ENCODE measurements at regions of chr12 and their contacts with region 1.

Region 1: DNA sequence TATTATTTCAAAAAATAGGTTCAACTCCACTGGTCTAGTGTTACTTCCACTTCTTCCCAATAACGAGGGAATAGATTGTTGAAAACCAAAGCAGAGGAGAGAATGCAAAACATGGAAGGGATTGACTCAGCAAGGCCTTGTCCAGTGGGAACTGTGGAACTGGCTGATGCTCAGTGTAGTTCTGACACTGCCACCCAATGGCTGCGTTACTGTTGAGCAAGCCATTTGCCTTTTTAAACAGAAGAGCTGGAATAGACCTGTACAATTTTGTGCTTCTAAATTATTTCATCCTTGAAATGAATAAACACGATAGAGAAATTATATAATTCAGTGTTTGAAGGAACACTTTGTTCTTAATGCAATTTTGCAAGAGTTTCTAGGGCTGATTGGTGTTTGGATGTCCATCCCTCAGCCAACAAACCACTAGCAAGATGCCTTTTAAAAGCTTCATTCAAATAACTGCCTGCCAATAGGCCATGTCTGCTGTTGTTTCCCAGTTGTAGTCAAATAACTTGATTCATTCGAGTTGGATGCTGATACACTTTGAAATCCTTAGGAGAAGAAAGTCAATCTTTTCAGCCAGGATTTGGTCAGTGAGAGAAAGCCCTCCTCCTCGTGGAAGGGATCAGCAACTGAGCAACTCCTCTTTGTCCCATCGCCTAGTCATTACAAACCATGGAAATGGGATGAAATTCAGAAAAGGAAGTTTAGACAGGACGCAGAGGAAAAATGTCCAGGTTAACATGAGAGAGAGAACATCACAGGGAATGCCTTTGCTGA is 7.3 kb upstream of the MGP start:
- DNase-seq: peak in 1 of 4 experiments; percentile 21
- ATAC-seq: 0 out of 3 replicates have a peak, but pooled peaks have one; percentile 33
- H3K4me3 ChIP-seq: no peak overlapping the region
- H3K27ac ChIP-seq: no peak overlapping the region
- H3K4me1 ChIP-seq: no peaks in the 10 kb centered on the region; a peak in 1 of 5 replicates
- H3K27me3 ChIP-seq: peaks cover 0 to 3% of the 10 kb centered on the region in 2 experiments; a peak in 2 of 5 replicates
- CTCF ChIP-seq: peak in 1 of 3 experiments; percentile 36; a peak in 2 of 6 replicates
- EP300 ChIP-seq: no peak
- POLR2A ChIP-seq: no peak
- RAD21 ChIP-seq: peak; percentile 49 to 64

Region 2: GRCh38 chr12:14769969-14770495 is 122.9 kb before region 1 on chr12:
- CTCF ChIA-PET with region 1: no interaction called
- POLR2A ChIA-PET with region 1: no interaction called
- in situ Hi-C with region 1: no loop called
- intact Hi-C with region 1: no loop called
- DNase-seq: no peak
- ATAC-seq: no peak
- H3K4me3 ChIP-seq: no peak overlapping the region
- H3K27ac ChIP-seq: no peak overlapping the region
- H3K4me1 ChIP-seq: no peaks in the 10 kb centered on the region; a peak in 1 of 5 replicates
- H3K27me3 ChIP-seq: peaks cover 0 to 14% of the 10 kb centered on the region in 2 experiments; a peak in 1 of 5 replicates
- CTCF ChIP-seq: no peak
- EP300 ChIP-seq: no peak
- POLR2A ChIP-seq: no peak
- RAD21 ChIP-seq: no peak

Region 3: DNA sequence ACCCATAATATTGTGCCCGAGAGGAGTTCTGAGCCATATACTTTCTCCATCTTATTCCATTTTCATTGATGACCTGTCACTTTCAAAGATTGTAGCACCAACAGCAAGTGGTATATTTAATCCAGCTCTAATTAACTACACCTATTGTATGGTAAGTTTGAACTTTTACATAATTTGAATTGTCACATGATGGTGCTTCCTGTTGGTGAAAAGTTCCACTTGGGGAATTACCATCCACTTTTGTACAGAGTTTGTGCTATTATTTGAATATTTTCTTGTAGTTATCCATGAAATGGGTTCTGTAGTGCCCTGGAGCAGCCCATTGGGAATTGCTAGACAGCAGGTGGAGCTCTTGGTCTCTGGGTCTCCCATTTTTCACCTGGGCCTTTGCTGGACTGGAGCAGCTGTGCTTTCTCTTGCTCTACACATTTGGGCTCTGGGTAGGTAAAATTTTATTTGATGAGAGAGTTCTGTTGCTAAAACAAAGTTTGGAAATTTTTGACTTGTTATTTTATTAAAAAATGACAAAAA is 81.9 kb before region 1 on chr12:
- CTCF ChIA-PET with region 1: no interaction called
- POLR2A ChIA-PET with region 1: no interaction called
- in situ Hi-C with region 1: no loop called
- intact Hi-C with region 1: loop called (anchors 2 kb)
- DNase-seq: peak in 2 of 4 experiments; percentile 10 to 37
- ATAC-seq: peak; percentile 72
- H3K4me3 ChIP-seq: no peak overlapping the region
- H3K27ac ChIP-seq: no peak overlapping the region
- H3K4me1 ChIP-seq: no peaks in the 10 kb centered on the region
- H3K27me3 ChIP-seq: no peaks in the 10 kb centered on the region
- CTCF ChIP-seq: peak; percentile 40 to 56 (median 50)
- EP300 ChIP-seq: no peak
- POLR2A ChIP-seq: no peak
- RAD21 ChIP-seq: peak; percentile 71 to 75